ENCODE measurements at regions of chrX and their contacts with region 1.

Region 1: GRCh38 chrX:73855546-73855945 is 292.5 kb downstream of the CHIC1 start:
- DNase-seq: peak; percentile 4 to 80 (median 51)
- ATAC-seq: peak in 2 of 4 experiments; percentile 14 to 24
- H3K4me3 ChIP-seq: no peak overlapping the region
- H3K4me3 Mint-ChIP-seq: no peak overlapping the region
- H3K27ac ChIP-seq: no peak overlapping the region
- H3K27ac Mint-ChIP-seq: no peak overlapping the region
- H3K4me1 ChIP-seq: no peaks in the 10 kb centered on the region
- H3K4me1 Mint-ChIP-seq: peaks cover 0 to 6% (median 4%) of the 10 kb centered on the region in 3 donors
- H3K27me3 ChIP-seq: no peaks in the 10 kb centered on the region
- H3K27me3 Mint-ChIP-seq: peaks cover 0 to 5% of the 10 kb centered on the region in 2 donors

Region 2: DNA sequence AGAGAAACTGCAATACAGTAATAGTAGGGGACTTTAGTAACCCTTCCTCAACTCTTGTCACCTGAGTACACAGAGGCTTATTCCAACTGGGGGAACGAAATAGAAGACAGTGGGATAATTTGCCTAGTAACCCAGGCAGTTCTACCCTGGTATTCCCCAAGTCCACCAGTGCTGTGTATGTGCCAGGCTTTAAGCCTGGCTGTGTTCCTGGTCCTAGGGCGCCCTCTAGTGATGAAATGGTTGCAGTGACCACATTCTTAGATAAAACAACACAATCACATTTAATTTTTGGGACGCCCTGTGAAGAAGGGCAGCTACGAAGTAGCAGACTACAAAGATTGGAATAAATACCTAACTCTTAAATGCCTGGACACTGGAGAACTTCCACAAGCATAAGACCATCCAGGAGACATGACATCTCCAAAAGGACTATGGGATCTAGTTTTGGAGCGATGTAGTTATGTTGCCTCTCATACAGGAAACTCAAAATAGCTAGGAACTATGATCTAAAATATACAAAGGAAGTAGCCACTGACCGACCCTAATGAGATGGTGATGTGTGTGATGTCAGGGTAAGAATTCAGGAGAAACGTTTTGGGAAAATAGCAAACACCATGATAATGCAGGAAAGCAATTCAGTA is 160.0 kb after region 1 on chrX:
- CTCF ChIA-PET with region 1: interaction called, 5 to 13 read pairs
- POLR2A ChIA-PET with region 1: no interaction called
- DNase-seq: peak; percentile 16 to 80 (median 49)
- ATAC-seq: peak in 3 of 4 experiments; percentile 41 to 91 (median 82)
- H3K4me3 ChIP-seq: no peak overlapping the region
- H3K4me3 Mint-ChIP-seq: no peak overlapping the region
- H3K27ac ChIP-seq: no peak overlapping the region
- H3K27ac Mint-ChIP-seq: no peak overlapping the region
- H3K4me1 ChIP-seq: no peaks in the 10 kb centered on the region
- H3K4me1 Mint-ChIP-seq: peaks cover 5 to 13% (median 10%) of the 10 kb centered on the region in 3 donors
- H3K27me3 ChIP-seq: no peaks in the 10 kb centered on the region
- H3K27me3 Mint-ChIP-seq: peaks cover 0 to 2% of the 10 kb centered on the region in 2 donors

Region 3: GRCh38 chrX:74291964-74292807 is 436.6 kb after region 1 on chrX:
- CTCF ChIA-PET with region 1: no interaction called
- POLR2A ChIA-PET with region 1: interaction called in 1 of 2 experiments, 10 read pairs
- DNase-seq: peak; percentile 59 to 91 (median 79)
- ATAC-seq: peak; percentile 88 to 91 (median 90)
- H3K4me3 ChIP-seq: peak overlapping the region; percentile 83 to 87
- H3K4me3 Mint-ChIP-seq: peak overlapping the region; percentile 88 to 97 (median 94)
- H3K27ac ChIP-seq: peak overlapping the region; percentile 88
- H3K27ac Mint-ChIP-seq: peak overlapping the region; percentile 98 to 99
- H3K4me1 ChIP-seq: peaks cover 4 to 12% of the 10 kb centered on the region in 2 experiments
- H3K4me1 Mint-ChIP-seq: peaks cover 25 to 42% (median 26%) of the 10 kb centered on the region in 3 donors
- H3K27me3 ChIP-seq: no peaks in the 10 kb centered on the region
- H3K27me3 Mint-ChIP-seq: peaks cover 0 to 8% of the 10 kb centered on the region in 2 donors

Measured in T-cell (primary cell).